RWPE1 (cell line): ENCODE measurements at regions of chr1 and their contacts with region 1.

Region 1: GRCh38 chr1:62175568-62176179 is 19.0 kb upstream of the L1TD1 start:
- DNase-seq: peak; percentile 46
- H3K27ac ChIP-seq: no peak overlapping the region
- CTCF ChIP-seq: peak; percentile 80

Region 2: DNA sequence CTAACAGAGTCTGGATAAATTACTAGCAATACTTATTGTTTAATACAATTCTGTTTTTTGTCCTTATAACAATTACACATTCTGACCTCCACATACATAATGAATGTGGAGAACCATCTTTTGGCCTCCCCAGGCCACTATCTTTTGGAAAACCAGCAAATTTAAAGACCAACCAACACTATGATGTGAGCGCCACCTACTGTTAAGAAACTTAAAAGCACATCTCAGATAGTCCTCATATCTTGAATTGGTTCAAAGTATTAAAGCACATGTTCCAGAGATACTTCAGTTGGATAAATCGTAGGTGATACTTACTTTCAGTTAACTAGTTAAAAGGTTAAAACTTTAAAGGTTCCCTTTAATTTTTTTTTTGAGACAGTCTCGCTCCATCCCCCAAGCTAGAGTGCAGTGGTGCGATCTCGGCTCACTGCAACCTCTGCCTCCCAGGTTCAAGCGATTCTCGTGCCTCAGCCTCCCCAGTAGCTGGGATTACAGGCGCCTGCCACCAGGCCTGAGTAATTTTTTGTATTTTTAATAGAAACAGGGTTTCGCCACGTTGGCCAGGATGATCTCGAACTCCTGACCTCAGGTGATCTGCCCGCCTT is 231.8 kb after region 1 on chr1:
- CTCF ChIA-PET with region 1: interaction called, 39 read pairs
- POLR2A ChIA-PET with region 1: no interaction called
- DNase-seq: peak; percentile 58
- H3K27ac ChIP-seq: no peak overlapping the region
- CTCF ChIP-seq: peak; percentile 76

Region 3: GRCh38 chr1:62436466-62437256 is 261.0 kb after region 1 on chr1 and contains the start of gene USP1:
- CTCF ChIA-PET with region 1: interaction called, 11 read pairs
- POLR2A ChIA-PET with region 1: no interaction called
- DNase-seq: peak; percentile 97
- H3K27ac ChIP-seq: peak within 1 kb of the TSS; percentile 100
- CTCF ChIP-seq: no peak